Caco-2 (cell line): ENCODE measurements at regions of chr20 and their contacts with region 1.

Region 1: GRCh38 chr20:26134606-26135005 is 438.0 kb upstream of the ZNF337 start:
- DNase-seq: no peak
- H3K4me3 ChIP-seq: no peak overlapping the region
- H3K4me3 Mint-ChIP-seq: no peak overlapping the region
- H3K27ac Mint-ChIP-seq: no peak overlapping the region
- H3K4me1 ChIP-seq: no peaks in the 10 kb centered on the region
- H3K4me1 Mint-ChIP-seq: no peaks in the 10 kb centered on the region
- H3K27me3 ChIP-seq: no peaks in the 10 kb centered on the region
- H3K27me3 Mint-ChIP-seq: peaks cover 18% of the 10 kb centered on the region
- CTCF ChIP-seq: no peak

Region 2: DNA sequence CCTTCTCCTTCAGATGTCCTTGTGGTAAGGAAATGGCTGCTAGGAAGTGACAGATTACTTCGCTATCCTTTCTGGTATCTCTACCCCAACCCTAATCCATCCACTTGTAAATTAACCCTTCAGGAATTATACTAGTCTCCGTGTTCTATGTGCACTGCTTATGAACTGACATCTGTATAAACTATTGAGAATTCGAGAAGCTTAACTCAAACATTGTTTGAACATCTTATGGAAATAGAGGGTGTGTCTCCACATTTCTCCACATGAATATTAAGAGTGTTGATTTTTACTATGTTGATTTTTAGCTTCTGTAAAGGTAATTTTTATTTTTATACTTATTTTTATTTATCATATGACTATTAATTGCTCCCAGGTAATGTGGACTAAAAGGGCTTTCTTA is 19.6 kb after region 1 on chr20:
- CTCF ChIA-PET with region 1: no interaction called
- POLR2A ChIA-PET with region 1: no interaction called
- intact Hi-C with region 1: no loop called
- DNase-seq: no peak
- H3K4me3 ChIP-seq: no peak overlapping the region
- H3K4me3 Mint-ChIP-seq: no peak overlapping the region
- H3K27ac Mint-ChIP-seq: no peak overlapping the region
- H3K4me1 ChIP-seq: no peaks in the 10 kb centered on the region
- H3K4me1 Mint-ChIP-seq: peaks cover 6% of the 10 kb centered on the region
- H3K27me3 ChIP-seq: no peaks in the 10 kb centered on the region
- H3K27me3 Mint-ChIP-seq: peaks cover 7% of the 10 kb centered on the region
- CTCF ChIP-seq: no peak

Region 3: DNA sequence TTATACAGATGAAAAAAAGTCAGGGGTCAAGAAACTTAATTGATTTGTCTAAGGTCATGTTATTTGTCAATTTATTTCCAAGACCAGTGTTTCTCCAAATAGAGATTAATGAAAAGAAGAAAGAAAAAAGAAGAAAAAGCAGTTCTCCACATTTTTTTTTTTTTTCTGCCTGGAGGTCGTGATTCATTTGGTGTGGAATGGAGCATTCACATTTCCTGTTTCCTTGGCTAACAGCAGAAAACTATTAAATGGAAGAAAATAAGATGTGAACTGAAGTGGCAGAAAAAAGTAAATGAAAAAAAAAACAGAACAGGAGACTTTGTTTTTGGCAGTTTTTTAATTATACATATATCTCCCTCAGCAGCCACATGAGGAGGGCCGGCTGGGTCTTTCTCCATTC is 32.9 kb after region 1 on chr20:
- CTCF ChIA-PET with region 1: no interaction called
- POLR2A ChIA-PET with region 1: no interaction called
- intact Hi-C with region 1: loop called (anchors 10 kb)
- DNase-seq: no peak
- H3K4me3 ChIP-seq: no peak overlapping the region
- H3K4me3 Mint-ChIP-seq: no peak overlapping the region
- H3K27ac Mint-ChIP-seq: no peak overlapping the region
- H3K4me1 ChIP-seq: no peaks in the 10 kb centered on the region
- H3K4me1 Mint-ChIP-seq: no peaks in the 10 kb centered on the region
- H3K27me3 ChIP-seq: no peaks in the 10 kb centered on the region
- H3K27me3 Mint-ChIP-seq: peaks cover 5% of the 10 kb centered on the region
- CTCF ChIP-seq: no peak